Activated naive CD4-positive, alpha-beta T cell treated with anti-CD3 and anti-CD28 coated beads for 36 hours (primary cell): ENCODE measurements at regions of chr17 and their contacts with region 1.

Region 1: DNA sequence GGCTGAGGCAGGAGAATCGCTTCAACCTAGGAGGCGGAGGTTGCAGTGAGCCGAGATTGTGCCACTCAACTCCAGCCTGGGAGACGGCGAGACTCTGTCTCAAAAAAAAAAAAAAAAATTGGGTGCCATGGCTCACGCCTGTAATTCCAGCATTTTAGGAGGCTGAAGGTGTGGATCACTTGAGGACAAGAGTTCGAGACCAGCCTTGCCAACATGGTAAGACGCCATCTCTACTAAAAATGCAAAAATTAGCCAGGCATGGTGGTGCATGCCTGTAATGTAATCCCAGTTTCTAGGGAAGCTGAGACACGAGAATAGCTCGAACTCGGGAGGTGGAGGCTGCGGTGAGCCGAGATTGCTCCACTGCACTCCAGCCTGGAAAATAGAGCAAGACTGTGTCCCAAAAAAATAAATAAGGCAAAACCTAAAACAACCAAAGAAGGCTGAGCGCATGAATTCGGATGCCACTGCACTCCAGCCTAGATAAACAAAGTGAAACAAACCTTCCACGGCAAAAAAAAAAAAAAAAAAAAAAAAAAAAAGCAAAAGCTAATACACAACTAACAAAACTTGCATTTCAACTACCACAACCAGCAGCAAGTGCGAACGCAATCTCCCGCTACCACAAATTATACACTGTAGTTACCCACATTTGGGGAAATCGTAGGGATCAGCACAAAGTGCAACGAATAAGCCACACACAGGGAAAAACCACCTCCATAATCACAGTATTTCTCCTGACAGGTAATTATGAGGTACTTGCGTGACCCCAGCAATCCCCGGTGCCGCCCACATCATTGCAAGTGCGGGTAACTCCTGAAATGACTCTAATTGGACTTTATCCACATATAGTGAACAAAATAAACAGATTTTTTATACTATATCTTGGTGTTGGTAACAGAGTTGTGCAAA is 25.6 kb downstream of the TEX14 start:
- DNase-seq: no peak
- H3K4me3 Mint-ChIP-seq: no peak overlapping the region
- H3K27ac Mint-ChIP-seq: no peak overlapping the region
- H3K4me1 Mint-ChIP-seq: peaks cover 6% of the 10 kb centered on the region
- H3K27me3 Mint-ChIP-seq: peaks cover 11% of the 10 kb centered on the region

Region 2: GRCh38 chr17:58703137-58703972 is 37.2 kb after region 1 on chr17:
- CTCF ChIA-PET with region 1: interaction called, 10 read pairs
- intact Hi-C with region 1: no loop called
- DNase-seq: peak; percentile 26
- H3K4me3 Mint-ChIP-seq: no peak overlapping the region
- H3K27ac Mint-ChIP-seq: peak overlapping the region; percentile 71
- H3K4me1 Mint-ChIP-seq: peaks cover 30% of the 10 kb centered on the region
- H3K27me3 Mint-ChIP-seq: no peaks in the 10 kb centered on the region